Calu3 (cell line): ENCODE measurements at regions of chr6 and their contacts with region 1.

Region 1: GRCh38 chr6:109397020-109397419 is 14.8 kb upstream of the CD164 start:
- DNase-seq: peak; percentile 20
- H3K4me3 Mint-ChIP-seq: no peak overlapping the region
- H3K27ac Mint-ChIP-seq: no peak overlapping the region
- H3K4me1 Mint-ChIP-seq: peaks cover 15% of the 10 kb centered on the region
- H3K27me3 Mint-ChIP-seq: no peaks in the 10 kb centered on the region
- CTCF ChIP-seq: no peak

Region 2: DNA sequence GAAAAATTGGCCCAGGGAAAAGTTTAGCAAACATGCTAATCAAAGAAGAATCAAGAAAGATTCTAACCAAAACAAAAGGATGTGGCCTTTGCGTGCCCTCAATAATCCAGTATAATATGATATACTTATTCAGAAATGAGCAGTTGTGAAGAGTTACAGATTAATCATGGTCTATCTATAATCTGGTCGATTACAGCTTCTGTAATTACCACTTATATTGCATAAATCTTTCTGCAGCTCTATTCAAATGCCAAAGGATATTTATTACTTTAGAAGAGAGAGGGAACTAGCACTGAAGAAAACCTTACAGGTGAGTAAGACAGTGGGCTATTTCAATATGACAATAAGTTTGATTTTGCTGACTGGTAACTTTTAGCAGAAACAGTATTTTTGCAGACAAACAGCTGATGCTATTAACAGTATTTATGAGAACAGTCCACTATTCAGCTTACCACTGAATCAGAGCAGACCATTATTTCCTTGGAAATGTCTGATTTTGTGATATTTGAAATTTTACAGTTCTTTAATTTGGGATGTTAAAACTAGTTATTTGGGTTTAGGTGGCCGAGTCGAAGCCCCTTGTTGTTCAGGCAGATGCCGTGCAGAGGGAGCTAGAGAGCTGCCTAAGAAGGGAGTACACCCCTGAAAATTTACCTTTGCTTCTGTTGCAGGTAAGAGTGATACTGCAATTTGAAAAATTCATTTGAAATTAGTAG is 209.5 kb before region 1 on chr6:
- CTCF ChIA-PET with region 1: interaction called, 4 read pairs
- intact Hi-C with region 1: loop called (anchors 1 kb)
- DNase-seq: peak; percentile 67
- H3K4me3 Mint-ChIP-seq: no peak overlapping the region
- H3K27ac Mint-ChIP-seq: no peak overlapping the region
- H3K4me1 Mint-ChIP-seq: no peaks in the 10 kb centered on the region
- H3K27me3 Mint-ChIP-seq: peaks cover 46% of the 10 kb centered on the region
- CTCF ChIP-seq: peak; percentile 82